ENCODE measurements at regions of chr2 and their contacts with region 1.

Region 1: GRCh38 chr2:192634557-192634956 is 439.8 kb upstream of the TMEFF2 start:
- DNase-seq: no peak
- H3K4me3 ChIP-seq: no peak overlapping the region
- H3K27ac ChIP-seq: no peak overlapping the region
- H3K4me1 ChIP-seq: no peaks in the 10 kb centered on the region
- H3K27me3 ChIP-seq: no peaks in the 10 kb centered on the region
- CTCF ChIP-seq: no peak

Region 2: GRCh38 chr2:192471982-192472381 is 162.6 kb before region 1 on chr2:
- CTCF ChIA-PET with region 1: no interaction called
- POLR2A ChIA-PET with region 1: no interaction called
- intact Hi-C with region 1: no loop called
- DNase-seq: no peak
- H3K4me3 ChIP-seq: no peak overlapping the region
- H3K27ac ChIP-seq: no peak overlapping the region
- H3K4me1 ChIP-seq: no peaks in the 10 kb centered on the region
- H3K27me3 ChIP-seq: no peaks in the 10 kb centered on the region
- CTCF ChIP-seq: no peak

Region 3: DNA sequence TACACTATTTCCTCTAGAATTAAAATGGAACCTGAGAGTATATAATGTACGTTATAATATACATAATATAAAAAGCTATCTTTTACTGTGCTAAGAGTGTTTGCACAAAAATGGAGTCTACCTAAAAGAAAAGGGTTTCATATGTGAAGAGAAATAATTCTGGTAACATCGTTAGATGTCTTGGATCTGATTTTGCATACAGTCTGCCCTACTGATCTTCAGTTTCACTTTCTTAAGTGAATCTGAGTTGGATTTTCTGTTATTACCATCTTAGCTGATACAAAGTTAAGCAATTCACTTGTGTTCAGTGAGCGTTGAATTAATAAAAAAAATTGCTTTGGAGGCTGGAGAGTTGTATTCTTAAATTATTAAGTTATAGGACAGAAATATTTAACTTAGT is 62.3 kb after region 1 on chr2:
- CTCF ChIA-PET with region 1: no interaction called
- POLR2A ChIA-PET with region 1: interaction called, 21 read pairs
- intact Hi-C with region 1: no loop called
- DNase-seq: no peak
- H3K4me3 ChIP-seq: no peak overlapping the region
- H3K27ac ChIP-seq: no peak overlapping the region
- H3K4me1 ChIP-seq: no peaks in the 10 kb centered on the region
- H3K27me3 ChIP-seq: no peaks in the 10 kb centered on the region
- CTCF ChIP-seq: no peak